ENCODE measurements at regions of chr16 and their contacts with region 1.

Region 1: GRCh38 chr16:88569985-88570690 is at the start of gene ZC3H18:
- DNase-seq: peak; percentile 77 to 99 (median 95)

Region 2: DNA sequence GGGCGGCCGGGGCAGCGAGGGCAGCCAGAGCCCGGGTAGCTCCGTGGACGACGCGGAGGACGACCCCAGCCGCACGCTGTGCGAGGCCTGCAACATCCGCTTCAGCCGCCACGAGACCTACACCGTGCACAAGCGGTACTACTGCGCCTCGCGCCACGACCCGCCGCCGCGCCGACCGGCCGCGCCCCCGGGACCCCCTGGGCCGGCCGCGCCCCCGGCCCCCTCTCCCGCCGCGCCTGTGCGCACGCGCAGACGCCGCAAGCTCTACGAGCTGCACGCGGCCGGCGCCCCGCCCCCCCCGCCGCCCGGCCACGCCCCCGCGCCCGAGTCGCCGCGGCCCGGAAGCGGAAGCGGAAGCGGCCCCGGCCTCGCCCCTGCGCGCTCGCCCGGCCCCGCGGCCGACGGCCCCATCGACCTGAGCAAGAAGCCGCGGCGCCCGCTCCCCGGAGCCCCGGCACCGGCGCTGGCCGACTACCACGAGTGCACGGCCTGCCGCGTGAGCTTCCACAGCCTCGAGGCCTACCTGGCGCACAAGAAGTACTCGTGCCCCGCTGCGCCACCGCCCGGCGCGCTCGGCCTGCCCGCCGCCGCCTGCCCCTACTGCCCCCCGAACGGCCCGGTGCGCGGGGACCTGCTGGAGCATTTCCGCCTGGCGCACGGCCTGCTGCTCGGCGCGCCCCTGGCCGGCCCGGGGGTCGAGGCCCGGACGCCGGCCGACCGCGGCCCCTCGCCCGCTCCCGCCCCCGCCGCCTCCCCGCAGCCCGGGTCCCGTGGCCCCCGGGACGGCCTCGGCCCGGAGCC is 36.0 kb before region 1 on chr16:
- intact Hi-C with region 1: loop called (anchors 5 kb)
- DNase-seq: peak in 41 of 42 donors; percentile 25 to 89 (median 76)

Region 3: GRCh38 chr16:88662843-88663606 is 92.9 kb after region 1 on chr16 and contains the start of gene MVD:
- intact Hi-C with region 1: loop called (anchors 10 kb)
- DNase-seq: peak; percentile 95 to 99 (median 98)